ENCODE measurements at regions of chr14 and their contacts with region 1.

Region 1: GRCh38 chr14:38721822-38722431 is 381.1 kb downstream of the SEC23A start:
- DNase-seq: peak; percentile 46 to 87 (median 73)
- H3K4me3 ChIP-seq: no peak overlapping the region
- H3K27ac ChIP-seq: no peak overlapping the region
- H3K4me1 ChIP-seq: no peaks in the 10 kb centered on the region
- H3K27me3 ChIP-seq: no peaks in the 10 kb centered on the region
- CTCF ChIP-seq: peak; percentile 77 to 94 (median 86)
- POLR2A ChIP-seq: no peak

Region 2: DNA sequence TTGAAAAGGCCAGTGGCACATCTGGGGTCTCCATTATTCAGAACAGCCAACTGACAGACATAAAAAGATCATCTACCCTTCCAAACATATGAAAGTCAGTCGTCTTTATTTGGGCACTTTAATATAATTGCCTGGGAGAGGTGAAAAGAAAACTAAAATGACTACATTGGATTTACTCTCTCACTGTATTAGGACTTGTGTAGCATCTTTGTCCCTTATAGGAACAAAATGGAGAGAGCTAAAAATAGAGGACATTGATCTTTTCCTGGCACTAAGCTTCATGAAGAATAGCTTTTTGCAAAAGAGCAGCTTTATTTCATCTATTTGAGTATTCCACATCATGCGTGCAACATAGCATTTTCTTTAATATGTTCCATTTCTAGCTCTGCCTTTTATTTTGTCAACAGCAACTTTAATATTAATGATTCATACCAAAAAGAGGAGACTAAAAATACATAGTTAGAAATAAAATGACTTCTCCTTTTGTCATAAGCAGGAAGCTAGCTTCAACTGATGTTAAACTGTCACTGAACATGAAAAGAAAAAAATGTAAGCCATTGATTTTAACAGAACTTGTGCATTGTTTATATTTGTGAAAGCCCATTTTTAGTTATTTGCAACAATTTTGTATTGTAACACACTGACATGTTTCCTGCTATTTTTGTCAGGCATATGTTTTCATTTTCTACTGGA is 126.5 kb after region 1 on chr14:
- intact Hi-C with region 1: no loop called
- DNase-seq: no peak
- H3K4me3 ChIP-seq: no peak overlapping the region
- H3K27ac ChIP-seq: no peak overlapping the region
- H3K4me1 ChIP-seq: no peaks in the 10 kb centered on the region
- H3K27me3 ChIP-seq: no peaks in the 10 kb centered on the region
- CTCF ChIP-seq: no peak
- POLR2A ChIP-seq: no peak

Region 3: DNA sequence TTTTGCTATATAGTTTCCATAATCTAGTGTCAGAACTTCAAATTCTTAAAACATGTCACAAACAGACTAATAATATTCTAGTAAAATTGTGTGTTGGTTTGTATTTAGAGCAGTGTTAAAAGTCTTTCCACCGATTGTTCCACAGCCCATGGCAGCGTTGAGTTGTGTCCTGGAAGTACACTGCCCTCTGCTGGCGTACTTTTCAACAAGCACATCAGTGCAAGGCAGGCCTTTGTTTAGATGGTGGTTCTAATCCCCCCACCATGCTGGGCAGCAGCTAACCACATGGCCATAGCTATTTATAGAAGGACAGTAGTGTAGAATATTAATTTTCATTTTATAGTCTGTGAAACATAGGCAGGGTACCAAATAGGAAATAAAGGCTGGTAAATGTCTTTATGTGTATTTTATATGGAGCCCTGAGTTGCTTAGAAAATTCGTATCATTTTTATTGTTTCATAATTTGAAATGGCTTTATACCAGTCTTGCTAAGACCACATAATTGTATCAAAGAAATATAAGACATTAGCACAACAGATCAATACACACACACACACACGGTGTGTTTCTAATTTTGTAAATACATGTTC is 145.7 kb after region 1 on chr14:
- intact Hi-C with region 1: loop called (anchors 5 kb)
- DNase-seq: peak; percentile 64 to 91 (median 83)
- H3K4me3 ChIP-seq: no peak overlapping the region
- H3K27ac ChIP-seq: no peak overlapping the region
- H3K4me1 ChIP-seq: no peaks in the 10 kb centered on the region
- H3K27me3 ChIP-seq: no peaks in the 10 kb centered on the region
- CTCF ChIP-seq: peak; percentile 73 to 90 (median 79)
- POLR2A ChIP-seq: no peak

Region 4: DNA sequence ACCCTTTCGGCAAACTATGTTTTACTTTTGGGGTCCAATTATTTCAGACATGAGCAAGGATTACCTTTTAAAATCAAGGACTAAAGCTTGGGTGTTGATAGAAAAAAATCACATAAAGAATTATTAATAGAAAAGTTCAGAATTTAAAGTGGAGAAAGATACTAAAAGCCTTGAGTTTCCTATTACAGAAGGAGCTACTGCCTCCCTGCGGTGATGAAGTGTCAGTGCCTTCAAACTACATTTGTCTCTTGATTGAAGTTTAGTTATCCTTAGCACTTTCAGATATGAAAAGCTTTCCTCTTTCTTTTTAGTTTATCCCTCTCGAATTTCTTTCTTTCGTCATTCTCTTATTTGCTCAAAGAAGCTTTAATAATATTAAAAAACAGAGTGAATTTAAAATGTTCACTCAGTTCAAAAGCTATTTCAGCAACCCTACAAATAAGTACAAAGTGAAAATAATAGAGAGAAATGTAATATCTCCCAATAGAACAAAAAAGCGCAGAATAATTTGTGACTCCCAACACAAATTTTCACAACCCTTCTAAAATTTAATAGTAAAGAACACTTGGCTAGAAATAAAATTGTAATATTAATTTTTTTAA is 293.5 kb after region 1 on chr14:
- intact Hi-C with region 1: loop called (anchors 5 to 10 kb)
- DNase-seq: peak in 3 of 7 donors; percentile 30 to 36 (median 33)
- H3K4me3 ChIP-seq: no peak overlapping the region
- H3K27ac ChIP-seq: no peak overlapping the region
- H3K4me1 ChIP-seq: no peaks in the 10 kb centered on the region
- H3K27me3 ChIP-seq: no peaks in the 10 kb centered on the region
- CTCF ChIP-seq: peak; percentile 55 to 84 (median 64)
- POLR2A ChIP-seq: no peak